Activated CD4-positive, alpha-beta T cell treated with anti-CD3 and anti-CD28 coated beads, Interleukin-2, amount 10 ng/mL, durations not matched to agents 24 days and 14 days (primary cell): ENCODE measurements at regions of chr12 and their contacts with region 1.

Region 1: DNA sequence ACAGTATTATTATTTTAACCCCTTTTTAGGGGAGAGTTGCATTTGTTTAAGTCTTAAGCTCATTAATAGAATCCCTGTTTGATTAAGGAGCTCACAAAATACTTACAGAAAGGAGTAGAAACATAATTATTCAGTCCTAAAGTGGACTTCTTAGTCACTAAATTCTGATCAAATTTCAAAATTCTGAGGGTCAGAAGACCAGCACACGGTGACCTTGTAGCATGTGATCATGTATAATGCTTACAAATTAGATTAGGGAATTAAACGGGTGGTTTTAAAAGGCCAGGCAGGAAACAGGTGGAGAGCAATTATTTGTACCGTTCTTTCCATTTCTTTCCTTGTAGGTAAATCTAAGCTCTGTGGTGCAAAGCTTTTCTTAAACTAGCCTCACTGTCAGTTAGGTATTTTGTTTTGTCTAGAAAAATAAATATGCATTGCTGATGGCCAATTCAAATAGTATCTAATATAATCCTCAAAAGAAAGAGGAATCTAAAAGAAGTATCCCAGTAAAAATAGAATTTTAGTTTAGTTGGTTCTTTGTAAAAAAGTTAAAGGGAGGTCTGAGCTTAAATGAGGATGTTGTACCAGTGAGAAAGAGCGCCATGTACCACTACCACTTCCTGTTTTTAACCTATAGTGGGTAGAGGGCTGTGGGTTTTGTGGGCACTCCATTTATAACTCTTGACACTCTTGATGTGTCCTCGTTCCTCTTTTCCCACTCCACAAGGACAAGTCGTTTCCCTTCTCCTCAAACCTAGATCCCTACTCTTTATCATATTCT is 51.1 kb downstream of the SLC38A1 start:
- DNase-seq: peak; percentile 92
- H3K4me3 Mint-ChIP-seq: peak overlapping the region; percentile 79
- H3K27ac Mint-ChIP-seq: peak overlapping the region; percentile 98
- H3K4me1 Mint-ChIP-seq: peaks cover 88% of the 10 kb centered on the region
- H3K27me3 Mint-ChIP-seq: no peaks in the 10 kb centered on the region

Region 2: DNA sequence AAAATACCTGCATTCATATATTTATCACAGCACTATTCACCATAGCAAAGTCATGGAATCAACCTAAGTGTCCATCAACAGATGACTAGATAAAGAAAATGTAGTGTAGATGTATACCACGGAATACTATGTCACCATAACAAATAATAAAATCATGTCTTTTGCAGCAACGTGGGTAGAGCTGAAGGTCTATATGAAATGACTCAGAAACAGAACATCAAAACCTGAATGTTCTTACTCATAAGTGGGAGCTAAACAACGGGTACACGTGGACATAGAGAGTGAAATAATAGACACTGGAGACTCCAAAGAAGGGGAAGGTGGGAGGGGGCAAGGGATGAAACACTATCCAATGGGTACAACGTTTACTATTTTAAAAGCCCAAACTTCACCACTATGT is 13.3 kb after region 1 on chr12:
- intact Hi-C with region 1: loop called (anchors 1 kb)
- DNase-seq: no peak
- H3K4me3 Mint-ChIP-seq: no peak overlapping the region
- H3K27ac Mint-ChIP-seq: no peak overlapping the region
- H3K4me1 Mint-ChIP-seq: peaks cover 42% of the 10 kb centered on the region
- H3K27me3 Mint-ChIP-seq: no peaks in the 10 kb centered on the region

Region 3: DNA sequence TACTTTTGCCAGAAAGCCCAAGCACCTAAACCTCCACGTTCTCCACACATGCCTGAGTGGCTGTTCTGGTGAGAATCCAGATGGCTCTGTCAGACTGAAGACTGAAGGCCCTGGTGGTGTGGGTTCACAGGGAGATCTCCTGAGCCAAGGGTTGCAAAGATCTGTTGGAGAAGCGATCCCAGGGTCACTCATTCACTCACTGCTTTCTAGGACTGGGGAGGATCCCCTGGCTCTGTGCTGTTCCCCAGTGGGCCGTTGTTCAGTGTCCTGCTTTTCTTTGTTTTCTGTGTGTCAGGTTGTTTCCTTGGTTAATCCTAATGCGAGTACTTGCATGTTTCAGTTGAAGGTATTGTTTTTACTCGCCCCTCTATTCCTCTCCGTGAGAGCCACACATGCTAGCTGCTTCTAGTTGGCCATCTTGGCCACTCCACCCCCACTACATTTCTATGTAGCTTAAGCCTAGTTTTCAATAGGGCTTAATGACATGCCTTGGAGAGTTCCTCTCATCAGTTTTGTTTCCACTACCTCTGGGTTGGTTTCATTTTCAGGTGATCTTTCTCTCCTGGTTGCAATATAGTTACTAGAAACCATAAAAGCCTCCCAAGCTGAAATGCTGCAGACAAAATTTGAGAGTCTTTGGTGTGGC is 299.3 kb after region 1 on chr12:
- intact Hi-C with region 1: loop called (anchors 2 kb)
- DNase-seq: peak; percentile 83
- H3K4me3 Mint-ChIP-seq: peak overlapping the region; percentile 80
- H3K27ac Mint-ChIP-seq: peak overlapping the region; percentile 95
- H3K4me1 Mint-ChIP-seq: peaks cover 71% of the 10 kb centered on the region
- H3K27me3 Mint-ChIP-seq: no peaks in the 10 kb centered on the region

Region 4: GRCh38 chr12:46546634-46547286 is 329.0 kb after region 1 on chr12:
- intact Hi-C with region 1: loop called (anchors 1 kb)
- DNase-seq: peak; percentile 79
- H3K4me3 Mint-ChIP-seq: peak overlapping the region; percentile 55
- H3K27ac Mint-ChIP-seq: peak overlapping the region; percentile 88
- H3K4me1 Mint-ChIP-seq: peaks cover 62% of the 10 kb centered on the region
- H3K27me3 Mint-ChIP-seq: no peaks in the 10 kb centered on the region

Region 5: GRCh38 chr12:46661110-46661845 is 443.5 kb after region 1 on chr12:
- intact Hi-C with region 1: loop called (anchors 5 kb)
- DNase-seq: peak; percentile 76
- H3K4me3 Mint-ChIP-seq: no peak overlapping the region
- H3K27ac Mint-ChIP-seq: peak overlapping the region; percentile 45
- H3K4me1 Mint-ChIP-seq: peaks cover 35% of the 10 kb centered on the region
- H3K27me3 Mint-ChIP-seq: no peaks in the 10 kb centered on the region

Region 6: DNA sequence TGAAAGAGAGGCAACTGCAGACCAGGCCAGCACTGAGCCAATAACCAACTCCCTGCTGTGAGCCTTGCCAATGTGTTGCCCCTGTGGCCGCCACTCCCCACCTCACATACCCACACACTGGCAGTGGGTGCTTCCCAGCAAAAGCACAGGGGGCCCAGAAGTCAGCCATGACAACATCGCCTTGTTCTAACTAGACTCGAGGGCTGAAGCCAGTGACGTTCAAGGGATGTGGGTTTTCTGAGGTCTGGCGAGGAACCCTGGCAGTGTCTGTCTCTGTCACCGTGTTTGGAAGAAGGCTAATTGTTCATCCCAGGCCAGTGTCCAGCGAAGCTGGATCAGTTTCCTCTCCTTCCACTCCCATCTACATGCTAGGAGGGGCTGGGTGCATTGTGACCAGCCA is 1173.8 kb after region 1 on chr12:
- intact Hi-C with region 1: loop called (anchors 2 kb)
- DNase-seq: peak; percentile 88
- H3K4me3 Mint-ChIP-seq: peak overlapping the region; percentile 81
- H3K27ac Mint-ChIP-seq: peak overlapping the region; percentile 99
- H3K4me1 Mint-ChIP-seq: peaks cover 77% of the 10 kb centered on the region
- H3K27me3 Mint-ChIP-seq: no peaks in the 10 kb centered on the region

Region 7: DNA sequence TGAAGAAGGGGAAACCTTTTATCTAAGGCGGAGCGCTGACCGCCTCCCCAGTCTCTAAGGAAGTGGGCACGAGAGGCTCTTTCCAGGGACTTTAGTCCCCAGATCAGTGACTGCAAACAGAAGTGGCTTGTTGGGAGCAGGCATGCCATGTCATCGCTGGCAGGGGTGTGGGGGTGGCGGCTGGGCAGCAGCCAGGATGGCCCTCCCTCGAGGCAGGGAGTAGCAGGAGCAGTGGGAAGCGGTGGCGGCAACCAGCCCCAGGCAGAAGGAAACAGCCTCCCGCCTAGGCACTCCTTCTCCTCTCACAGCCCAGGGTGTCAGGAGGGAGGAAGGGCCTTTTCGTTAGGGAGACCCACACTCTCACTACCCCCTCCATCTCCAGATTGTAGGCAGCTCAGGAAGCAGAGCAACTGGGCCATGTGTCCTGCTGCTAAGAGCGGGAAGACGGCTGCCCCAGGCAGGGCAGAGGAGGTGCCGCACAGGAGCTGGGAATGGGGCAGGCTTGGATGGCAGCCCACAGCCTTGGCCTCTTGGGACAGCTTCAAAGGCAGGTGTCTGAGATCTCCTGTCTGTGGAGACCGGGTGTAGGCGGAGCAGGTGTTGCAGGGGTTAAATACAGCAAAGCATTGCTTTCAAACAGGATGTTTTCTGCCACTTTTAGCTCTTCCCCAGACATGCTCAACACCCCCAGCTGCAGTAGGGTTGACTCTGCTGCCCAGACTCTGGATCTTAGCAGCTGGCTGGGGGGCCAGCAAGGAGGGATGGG is 1665.2 kb after region 1 on chr12:
- intact Hi-C with region 1: loop called (anchors 5 kb)
- DNase-seq: peak; percentile 84
- H3K4me3 Mint-ChIP-seq: peak overlapping the region; percentile 95
- H3K27ac Mint-ChIP-seq: peak overlapping the region; percentile 99
- H3K4me1 Mint-ChIP-seq: peaks cover 81% of the 10 kb centered on the region
- H3K27me3 Mint-ChIP-seq: no peaks in the 10 kb centered on the region